Activated T-helper 2 cell treated with anti-CD3 and anti-CD28 coated beads, Interferon-gamma antibody, Interleukin-2, Interleukin-4, amounts not matched to agents 10 μg/mL and 5 μg/mL and 100 μg/mL, durations not matched to agents 14 hours and 24 hours and 36 hours (primary cell): ENCODE measurements at regions of chr19 and their contacts with region 1.

Region 1: DNA sequence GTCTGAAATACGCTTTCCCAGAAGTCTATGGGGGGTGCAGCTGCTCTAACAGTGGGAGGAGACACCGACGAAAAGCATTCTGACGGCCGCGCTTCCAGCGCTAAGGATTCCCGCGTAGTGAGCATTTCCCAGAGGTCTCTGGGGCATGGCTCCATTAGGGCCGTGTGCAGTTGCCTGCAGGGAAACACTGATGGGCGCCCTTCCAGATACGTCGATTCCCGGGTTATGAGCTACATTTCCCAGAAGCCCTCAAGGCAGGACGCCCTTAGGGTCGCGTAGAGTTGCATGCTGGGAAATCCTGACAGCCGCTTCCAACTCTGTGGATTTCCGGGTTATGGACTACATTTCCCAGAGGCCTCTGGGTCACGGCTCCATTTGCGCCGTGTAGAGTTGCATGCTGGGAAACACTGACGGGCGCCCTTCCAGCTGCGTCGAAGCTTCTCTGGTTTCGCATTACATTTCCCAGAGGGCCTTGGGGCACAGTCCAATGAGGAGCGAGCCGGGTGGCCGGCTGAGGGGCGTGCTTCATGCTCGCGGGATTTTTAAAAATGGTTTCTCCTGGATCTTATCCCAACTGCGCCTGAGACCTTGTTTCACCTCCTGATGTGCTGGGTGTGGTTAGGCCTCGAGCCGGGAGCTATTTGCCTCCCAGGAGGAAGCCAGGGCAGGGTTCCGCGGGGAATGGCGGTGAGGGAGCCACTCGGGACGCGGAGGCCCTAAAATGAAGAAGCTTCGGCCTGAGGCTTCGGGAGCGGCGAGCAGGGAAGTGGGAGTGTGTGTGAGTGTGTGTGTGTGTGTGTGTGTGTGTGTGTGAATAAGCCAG is 17.2 kb upstream of the ZNF331 start:
- DNase-seq: peak; percentile 82
- H3K4me3 Mint-ChIP-seq: peak overlapping the region; percentile 94
- H3K27ac Mint-ChIP-seq: peak overlapping the region; percentile 74
- H3K4me1 Mint-ChIP-seq: peaks cover 13% of the 10 kb centered on the region
- H3K27me3 Mint-ChIP-seq: no peaks in the 10 kb centered on the region

Region 2: DNA sequence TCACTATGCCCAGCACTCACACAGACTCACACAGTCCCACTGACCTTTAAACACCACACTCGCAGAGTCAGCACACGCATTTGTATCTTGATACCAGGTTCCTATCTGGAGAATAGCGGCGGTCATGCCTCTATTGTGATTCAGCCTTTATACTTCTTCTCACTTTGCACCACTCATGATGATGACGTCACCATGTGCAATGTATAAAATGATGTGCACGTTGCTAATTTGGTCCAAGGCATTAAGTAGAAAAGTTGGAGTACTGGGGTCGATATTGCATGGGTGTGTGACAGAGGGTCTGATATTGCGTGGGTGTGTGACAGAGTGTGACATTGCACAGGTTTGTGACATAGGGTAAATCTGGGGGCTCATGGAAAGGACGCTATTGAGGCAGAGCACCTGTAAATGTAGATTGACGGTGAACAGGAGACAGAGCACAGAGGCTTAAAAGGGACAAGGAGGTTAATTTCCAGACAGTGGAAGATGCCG is 248.8 kb before region 1 on chr19:
- intact Hi-C with region 1: no loop called
- DNase-seq: no peak
- H3K4me3 Mint-ChIP-seq: no peak overlapping the region
- H3K27ac Mint-ChIP-seq: no peak overlapping the region
- H3K4me1 Mint-ChIP-seq: no peaks in the 10 kb centered on the region
- H3K27me3 Mint-ChIP-seq: no peaks in the 10 kb centered on the region

Region 3: GRCh38 chr19:53431399-53432087 is 89.2 kb before region 1 on chr19 and contains the start of gene ZNF761:
- intact Hi-C with region 1: loop called (anchors 2 kb)
- DNase-seq: peak; percentile 96
- H3K4me3 Mint-ChIP-seq: peak within 1 kb of the TSS; percentile 94
- H3K27ac Mint-ChIP-seq: peak within 1 kb of the TSS; percentile 87
- H3K4me1 Mint-ChIP-seq: peaks cover 14% of the 10 kb centered on the region
- H3K27me3 Mint-ChIP-seq: no peaks in the 10 kb centered on the region
- total RNA-seq, gene ZNF761: 12.1 and 12.2 TPM in 2 replicates

Region 4: GRCh38 chr19:53537480-53538383 is 17.0 kb after region 1 on chr19 and contains the start of gene ZNF331:
- intact Hi-C with region 1: loop called (anchors 1 kb)
- DNase-seq: peak; percentile 82
- H3K4me3 Mint-ChIP-seq: peak within 1 kb of the TSS; percentile 96
- H3K27ac Mint-ChIP-seq: peak within 1 kb of the TSS; percentile 97
- H3K4me1 Mint-ChIP-seq: peaks cover 6% of the 10 kb centered on the region
- H3K27me3 Mint-ChIP-seq: no peaks in the 10 kb centered on the region
- total RNA-seq, gene ZNF331: 15.7 and 18.3 TPM in 2 replicates

Region 5: DNA sequence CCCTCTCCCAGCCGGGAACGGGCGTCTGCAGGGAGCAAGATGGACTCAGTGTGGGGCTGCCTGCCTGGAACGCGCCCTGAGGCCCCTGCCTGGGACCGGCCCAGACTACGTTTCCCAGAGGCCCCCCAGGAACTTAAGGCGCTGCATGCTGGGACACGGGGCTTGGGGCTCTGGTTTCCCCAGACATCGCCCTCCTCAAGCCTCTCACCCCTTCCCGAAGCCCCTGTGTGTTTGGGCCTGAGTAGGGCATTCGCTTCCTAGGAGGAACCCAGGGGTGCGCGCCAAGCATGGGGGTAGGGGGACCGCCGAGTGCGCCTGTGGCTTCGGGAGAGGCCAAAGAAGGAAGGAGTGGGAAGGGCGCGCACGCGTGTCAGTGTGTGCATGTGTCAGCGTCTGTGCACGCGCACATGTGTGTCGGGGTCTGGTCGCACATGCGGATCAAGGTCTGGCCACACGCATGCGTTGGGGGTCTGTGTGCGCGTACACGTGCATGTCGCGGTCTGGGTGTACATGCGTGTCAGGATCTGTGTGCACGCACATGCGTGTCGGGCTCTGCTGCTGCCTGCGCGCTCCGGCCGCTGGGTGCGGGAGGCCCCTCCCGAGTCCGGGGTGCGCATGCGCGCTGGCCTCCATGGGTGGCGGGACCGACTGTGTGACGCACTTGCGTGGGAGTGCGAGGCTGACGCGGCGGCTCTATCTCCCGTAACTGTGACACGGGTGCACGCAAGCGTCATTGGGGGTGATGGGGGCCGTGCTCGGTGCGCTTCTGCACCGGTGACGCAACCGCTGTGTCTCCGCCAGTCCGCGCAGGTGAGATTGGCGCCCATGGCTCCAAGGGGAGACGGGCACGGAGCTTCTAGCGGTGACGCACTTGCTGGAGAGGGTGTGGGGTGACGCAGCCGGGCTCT is 33.4 kb after region 1 on chr19:
- intact Hi-C with region 1: loop called (anchors 1 kb)
- DNase-seq: peak; percentile 86
- H3K4me3 Mint-ChIP-seq: peak overlapping the region; percentile 89
- H3K27ac Mint-ChIP-seq: peak overlapping the region; percentile 94
- H3K4me1 Mint-ChIP-seq: peaks cover 16% of the 10 kb centered on the region
- H3K27me3 Mint-ChIP-seq: no peaks in the 10 kb centered on the region